Activated CD4-positive, alpha-beta T cell treated with anti-CD3 and anti-CD28 coated beads, Interleukin-2, amount 10 ng/mL, durations not matched to agents 24 days and 14 days (primary cell): ENCODE measurements at regions of chr6 and their contacts with region 1.

Region 1: DNA sequence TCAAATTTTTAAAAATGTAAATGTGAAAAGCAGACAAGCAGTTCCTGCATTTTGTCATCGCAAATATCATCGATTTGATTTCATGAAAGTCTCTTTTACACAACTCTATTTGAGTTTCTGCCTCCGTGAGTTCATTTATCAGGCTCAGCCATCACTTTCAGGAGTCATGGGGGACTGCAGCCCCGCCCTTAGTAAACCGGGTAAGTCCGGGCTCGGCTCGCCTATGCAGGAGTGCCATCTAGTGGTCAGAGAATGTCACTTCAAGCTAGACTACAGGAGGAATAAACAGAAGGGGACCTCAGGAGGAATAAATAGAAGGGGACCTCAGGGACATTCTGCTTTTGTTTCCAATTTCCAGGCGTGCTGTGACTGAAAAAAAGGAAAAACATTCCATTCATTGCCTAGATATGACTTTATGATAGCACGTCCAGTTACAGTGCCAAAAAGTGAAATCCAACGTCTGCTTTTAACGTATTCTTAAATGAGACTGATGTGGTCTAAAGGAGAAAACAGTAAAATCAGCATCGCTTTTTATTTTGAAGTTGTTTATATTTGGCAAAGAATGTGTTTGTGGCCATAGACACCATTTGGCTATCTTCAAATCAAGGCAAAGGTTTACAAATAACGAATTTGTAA is 333.9 kb downstream of the HACE1 start:
- DNase-seq: peak; percentile 90
- H3K4me3 Mint-ChIP-seq: peak overlapping the region; percentile 64
- H3K27ac Mint-ChIP-seq: no peak overlapping the region
- H3K4me1 Mint-ChIP-seq: peaks cover 5% of the 10 kb centered on the region
- H3K27me3 Mint-ChIP-seq: peaks cover 4% of the 10 kb centered on the region

Region 2: DNA sequence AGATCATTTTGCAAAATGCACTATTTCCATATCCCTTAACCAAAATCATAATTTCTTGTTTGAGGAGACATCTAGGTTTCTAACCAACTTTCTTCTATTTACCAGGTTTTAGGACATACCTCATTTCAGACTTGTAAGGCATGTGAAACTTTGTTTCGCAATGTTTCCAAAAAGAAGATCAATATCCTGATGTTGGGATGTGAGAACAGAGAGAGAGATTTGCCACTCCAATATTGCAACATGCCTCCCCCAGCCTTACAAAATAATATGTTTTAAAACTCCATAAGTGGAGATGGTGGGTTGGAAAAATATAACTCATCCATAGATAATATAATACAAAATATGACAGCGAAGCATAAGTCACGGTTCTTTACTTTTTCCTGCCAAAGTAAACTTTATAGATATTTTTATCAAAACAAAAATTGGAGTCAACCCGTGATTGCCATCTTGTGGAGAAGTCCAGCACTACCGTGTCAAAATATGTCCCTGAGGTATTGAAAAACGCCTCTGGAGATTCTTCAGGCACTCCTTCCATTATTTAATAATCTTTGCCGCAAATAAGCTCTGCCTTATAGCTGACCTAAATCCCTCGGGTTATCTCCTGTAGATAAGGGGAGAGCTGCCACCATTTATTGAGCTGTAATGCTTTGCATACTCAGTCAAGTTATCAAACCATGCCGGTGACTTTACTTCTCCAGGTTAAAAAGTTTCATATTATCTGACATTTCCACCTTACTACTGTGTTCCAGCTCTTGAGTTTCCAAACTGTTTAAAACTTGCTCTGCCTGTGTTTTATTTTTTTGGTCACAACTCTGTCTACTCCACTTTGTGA is 200.2 kb before region 1 on chr6:
- intact Hi-C with region 1: loop called (anchors 2 kb)
- DNase-seq: no peak
- H3K4me3 Mint-ChIP-seq: no peak overlapping the region
- H3K27ac Mint-ChIP-seq: no peak overlapping the region
- H3K4me1 Mint-ChIP-seq: no peaks in the 10 kb centered on the region
- H3K27me3 Mint-ChIP-seq: no peaks in the 10 kb centered on the region

Region 3: GRCh38 chr6:104580452-104580851 is 54.7 kb after region 1 on chr6:
- intact Hi-C with region 1: no loop called
- DNase-seq: no peak
- H3K4me3 Mint-ChIP-seq: no peak overlapping the region
- H3K27ac Mint-ChIP-seq: no peak overlapping the region
- H3K4me1 Mint-ChIP-seq: no peaks in the 10 kb centered on the region
- H3K27me3 Mint-ChIP-seq: peaks cover 2% of the 10 kb centered on the region

Region 4: DNA sequence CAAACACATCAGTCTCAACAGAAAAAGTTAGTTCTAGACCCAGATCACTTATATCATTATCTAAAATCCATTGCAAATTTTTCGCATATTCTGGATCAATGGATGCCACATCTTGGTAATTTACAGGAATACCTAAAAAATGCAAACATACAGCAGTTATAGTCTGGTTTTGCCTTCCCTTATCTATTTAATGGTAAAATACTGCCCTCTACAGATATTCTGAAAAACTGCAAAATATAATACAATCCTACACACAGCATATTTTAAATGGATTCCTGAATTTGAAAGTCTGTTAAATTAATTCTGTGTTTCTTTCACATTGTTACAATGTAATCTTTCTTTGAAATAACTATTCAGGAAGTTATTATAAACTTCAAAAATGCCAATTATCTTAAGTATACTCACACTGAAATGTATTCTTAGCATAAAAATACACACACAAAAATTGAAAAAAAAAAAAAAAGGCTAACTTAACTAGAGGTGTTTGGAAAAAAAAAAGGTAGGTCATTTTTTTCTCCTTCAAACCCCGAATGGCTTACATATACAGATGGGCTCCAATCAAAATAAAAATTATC is 245.6 kb after region 1 on chr6:
- intact Hi-C with region 1: loop called (anchors 5 kb)
- DNase-seq: no peak
- H3K4me3 Mint-ChIP-seq: no peak overlapping the region
- H3K27ac Mint-ChIP-seq: no peak overlapping the region
- H3K4me1 Mint-ChIP-seq: peaks cover 8% of the 10 kb centered on the region
- H3K27me3 Mint-ChIP-seq: no peaks in the 10 kb centered on the region